Activated CD8-positive, alpha-beta T cell treated with anti-CD3 and anti-CD28 coated beads for 36 hours (primary cell): ENCODE measurements at regions of chr3 and their contacts with region 1.

Region 1: DNA sequence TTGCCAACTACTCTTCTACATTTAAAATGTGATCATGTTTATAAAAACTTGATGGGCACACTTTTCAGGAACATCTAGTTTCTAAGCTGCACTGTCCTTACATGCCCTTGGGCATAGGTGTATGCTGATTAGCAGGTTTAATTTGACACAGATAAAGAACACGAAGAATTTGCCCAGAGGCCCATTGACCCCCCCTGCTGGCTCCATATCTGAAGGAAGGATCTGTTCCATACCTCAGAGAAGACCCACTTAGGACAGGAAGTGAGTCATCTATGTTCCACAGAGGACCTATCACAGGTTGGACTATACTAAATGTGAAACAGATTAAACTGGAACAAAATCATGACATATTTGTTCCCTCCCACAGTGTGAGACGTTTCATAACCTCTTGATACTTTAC is 92.8 kb upstream of the LPP start:
- DNase-seq: peak; percentile 87
- ATAC-seq: peak; percentile 98
- H3K4me3 Mint-ChIP-seq: no peak overlapping the region
- H3K27ac Mint-ChIP-seq: peak overlapping the region; percentile 87
- H3K4me1 Mint-ChIP-seq: peaks cover 38% of the 10 kb centered on the region
- H3K27me3 Mint-ChIP-seq: no peaks in the 10 kb centered on the region
- CTCF ChIP-seq: peak; percentile 25

Region 2: DNA sequence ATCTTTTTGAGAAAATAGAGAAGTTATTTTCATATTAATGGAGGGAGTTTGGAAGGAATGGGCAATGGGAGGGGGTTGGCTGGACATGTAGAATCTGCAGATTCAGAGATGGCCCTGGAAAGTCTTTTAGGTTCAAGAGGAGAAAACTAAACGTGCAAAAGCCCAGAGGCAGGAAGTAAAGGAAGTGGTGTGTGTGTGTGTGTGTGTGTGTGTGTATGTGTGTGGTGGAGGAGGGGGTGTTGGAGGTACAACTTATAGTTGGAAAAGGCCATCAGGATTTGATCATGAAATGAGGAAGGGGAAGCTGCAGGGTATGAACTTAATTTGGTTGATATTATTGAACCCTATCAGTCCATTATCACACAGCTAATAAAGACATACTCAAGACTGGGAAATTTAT is 87.2 kb after region 1 on chr3:
- CTCF ChIA-PET with region 1: no interaction called
- POLR2A ChIA-PET with region 1: no interaction called
- intact Hi-C with region 1: no loop called
- DNase-seq: no peak
- ATAC-seq: no peak
- H3K4me3 Mint-ChIP-seq: no peak overlapping the region
- H3K27ac Mint-ChIP-seq: no peak overlapping the region
- H3K4me1 Mint-ChIP-seq: peaks cover 23% of the 10 kb centered on the region
- H3K27me3 Mint-ChIP-seq: no peaks in the 10 kb centered on the region
- CTCF ChIP-seq: no peak

Region 3: DNA sequence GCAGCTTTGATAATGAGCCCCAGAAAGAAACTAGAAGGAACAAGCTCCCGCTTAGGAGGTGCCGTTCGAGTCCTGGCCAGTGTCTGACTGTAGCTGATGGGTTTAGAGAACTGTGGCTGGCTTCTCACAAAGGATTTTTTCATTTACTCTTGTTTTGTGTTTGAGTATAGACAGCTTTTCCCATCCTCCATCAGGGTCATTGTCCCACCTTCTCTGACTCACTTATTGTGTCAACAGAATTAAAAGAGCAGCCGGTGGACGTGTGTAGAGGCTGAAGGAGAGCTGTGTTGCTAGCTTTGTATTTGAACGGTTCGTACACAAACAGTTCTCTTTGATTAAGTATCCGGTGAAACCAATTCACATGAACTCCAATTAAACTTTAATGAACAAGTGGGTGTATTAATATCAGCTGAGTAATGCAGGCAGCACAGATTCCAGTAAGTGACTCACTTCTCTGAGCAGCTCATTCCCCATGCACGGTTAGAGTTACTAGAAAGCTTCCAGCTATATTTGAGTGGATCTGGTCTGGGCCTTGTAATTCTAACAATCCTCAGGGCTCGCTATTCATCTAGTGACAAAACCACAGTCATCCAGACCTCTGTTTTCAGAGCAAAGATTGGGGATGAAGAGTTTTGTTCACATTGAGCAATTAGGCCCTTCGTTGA is 233.8 kb after region 1 on chr3:
- CTCF ChIA-PET with region 1: no interaction called
- POLR2A ChIA-PET with region 1: no interaction called
- intact Hi-C with region 1: loop called (anchors 10 kb)
- DNase-seq: no peak
- ATAC-seq: no peak
- H3K4me3 Mint-ChIP-seq: no peak overlapping the region
- H3K27ac Mint-ChIP-seq: peak overlapping the region; percentile 27
- H3K4me1 Mint-ChIP-seq: peaks cover 71% of the 10 kb centered on the region
- H3K27me3 Mint-ChIP-seq: no peaks in the 10 kb centered on the region
- CTCF ChIP-seq: no peak